ENCODE measurements at regions of chr10 and their contacts with region 1.

Region 1: GRCh38 chr10:6050801-6051445 is 11.2 kb downstream of the IL2RA start:
- DNase-seq: peak; percentile 97
- H3K4me3 Mint-ChIP-seq: peak overlapping the region; percentile 83
- H3K27ac Mint-ChIP-seq: peak overlapping the region; percentile 98
- H3K4me1 Mint-ChIP-seq: peaks cover 86% of the 10 kb centered on the region
- H3K27me3 Mint-ChIP-seq: no peaks in the 10 kb centered on the region

Region 2: DNA sequence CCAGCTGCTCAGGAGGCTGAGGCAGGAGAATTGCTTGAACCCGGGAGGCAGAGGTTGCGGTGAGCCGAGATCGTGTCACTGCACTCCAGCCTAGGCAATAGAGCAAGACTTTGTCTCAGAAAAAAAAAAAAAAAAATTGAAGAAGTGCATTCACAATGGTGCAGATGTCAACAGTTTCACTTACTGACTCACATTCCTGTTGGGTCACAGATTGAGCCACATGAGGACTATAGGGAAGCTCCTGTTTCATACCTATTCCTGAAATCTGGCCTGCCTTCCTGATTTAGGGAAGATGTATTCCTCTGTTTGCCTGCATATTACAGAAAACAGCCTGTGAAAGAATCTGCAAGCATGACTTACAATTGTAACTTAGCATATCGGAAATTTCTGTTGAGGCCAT is 776.1 kb before region 1 on chr10:
- CTCF ChIA-PET with region 1: no interaction called
- POLR2A ChIA-PET with region 1: no interaction called
- intact Hi-C with region 1: no loop called
- DNase-seq: no peak
- H3K4me3 Mint-ChIP-seq: no peak overlapping the region
- H3K27ac Mint-ChIP-seq: no peak overlapping the region
- H3K4me1 Mint-ChIP-seq: peaks cover 12% of the 10 kb centered on the region
- H3K27me3 Mint-ChIP-seq: no peaks in the 10 kb centered on the region

Region 3: DNA sequence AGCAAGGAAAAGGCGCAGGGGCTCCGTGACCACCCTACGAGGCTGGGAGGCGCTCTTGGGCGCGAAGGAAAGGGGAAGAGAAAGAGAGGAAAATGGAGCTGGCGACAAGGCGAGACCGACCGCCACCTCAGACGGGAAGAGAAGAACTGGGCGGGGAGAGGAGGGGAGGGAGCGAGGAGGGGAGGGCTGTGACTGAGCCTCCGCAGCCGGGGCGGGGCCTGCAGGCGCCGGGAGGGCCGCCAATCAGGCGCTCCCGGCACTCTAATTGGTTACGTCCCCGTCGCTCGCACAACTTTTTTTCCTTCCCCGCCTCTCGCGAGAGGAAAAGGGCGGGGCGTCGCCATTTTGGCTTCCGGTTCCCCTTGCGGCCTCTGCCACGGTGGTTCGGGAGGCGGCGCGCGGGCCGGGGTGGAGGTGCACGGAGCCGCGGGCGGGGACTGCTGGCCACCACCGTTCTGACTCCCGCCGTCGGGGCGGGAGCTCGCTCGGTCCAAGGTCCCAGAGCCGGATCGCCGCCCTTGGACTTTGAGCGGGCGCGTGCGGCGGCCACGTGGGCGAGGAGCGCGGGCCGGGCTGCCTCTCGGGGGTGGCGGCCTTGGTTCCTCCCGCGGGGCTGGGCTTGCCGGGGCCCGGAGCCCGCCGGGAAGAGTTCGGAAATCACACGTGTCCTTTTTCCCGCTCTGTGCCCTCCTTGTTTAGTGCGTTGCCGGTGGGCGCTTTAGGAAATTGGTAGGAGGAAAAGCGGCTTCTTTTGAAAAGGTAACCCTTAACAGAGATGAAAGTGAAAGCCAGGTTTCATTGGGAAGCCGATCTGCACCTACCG is 237.4 kb before region 1 on chr10 and contains the start of gene GDI2:
- CTCF ChIA-PET with region 1: no interaction called
- POLR2A ChIA-PET with region 1: no interaction called
- intact Hi-C with region 1: loop called (anchors 5 kb)
- DNase-seq: peak; percentile 98
- H3K4me3 Mint-ChIP-seq: peak within 1 kb of the TSS; percentile 82
- H3K27ac Mint-ChIP-seq: peak within 1 kb of the TSS; percentile 95
- H3K4me1 Mint-ChIP-seq: peaks cover 60% of the 10 kb centered on the region
- H3K27me3 Mint-ChIP-seq: no peaks in the 10 kb centered on the region
- total RNA-seq, gene GDI2: 283 to 286 TPM

Region 4: GRCh38 chr10:6014241-6014761 is 36.6 kb before region 1 on chr10:
- CTCF ChIA-PET with region 1: interaction called, 5 read pairs
- POLR2A ChIA-PET with region 1: interaction called, 3 read pairs
- intact Hi-C with region 1: loop called (anchors 1 kb)
- DNase-seq: peak; percentile 67
- H3K4me3 Mint-ChIP-seq: no peak overlapping the region
- H3K27ac Mint-ChIP-seq: peak overlapping the region; percentile 90
- H3K4me1 Mint-ChIP-seq: peaks cover 69% of the 10 kb centered on the region
- H3K27me3 Mint-ChIP-seq: no peaks in the 10 kb centered on the region

Region 5: DNA sequence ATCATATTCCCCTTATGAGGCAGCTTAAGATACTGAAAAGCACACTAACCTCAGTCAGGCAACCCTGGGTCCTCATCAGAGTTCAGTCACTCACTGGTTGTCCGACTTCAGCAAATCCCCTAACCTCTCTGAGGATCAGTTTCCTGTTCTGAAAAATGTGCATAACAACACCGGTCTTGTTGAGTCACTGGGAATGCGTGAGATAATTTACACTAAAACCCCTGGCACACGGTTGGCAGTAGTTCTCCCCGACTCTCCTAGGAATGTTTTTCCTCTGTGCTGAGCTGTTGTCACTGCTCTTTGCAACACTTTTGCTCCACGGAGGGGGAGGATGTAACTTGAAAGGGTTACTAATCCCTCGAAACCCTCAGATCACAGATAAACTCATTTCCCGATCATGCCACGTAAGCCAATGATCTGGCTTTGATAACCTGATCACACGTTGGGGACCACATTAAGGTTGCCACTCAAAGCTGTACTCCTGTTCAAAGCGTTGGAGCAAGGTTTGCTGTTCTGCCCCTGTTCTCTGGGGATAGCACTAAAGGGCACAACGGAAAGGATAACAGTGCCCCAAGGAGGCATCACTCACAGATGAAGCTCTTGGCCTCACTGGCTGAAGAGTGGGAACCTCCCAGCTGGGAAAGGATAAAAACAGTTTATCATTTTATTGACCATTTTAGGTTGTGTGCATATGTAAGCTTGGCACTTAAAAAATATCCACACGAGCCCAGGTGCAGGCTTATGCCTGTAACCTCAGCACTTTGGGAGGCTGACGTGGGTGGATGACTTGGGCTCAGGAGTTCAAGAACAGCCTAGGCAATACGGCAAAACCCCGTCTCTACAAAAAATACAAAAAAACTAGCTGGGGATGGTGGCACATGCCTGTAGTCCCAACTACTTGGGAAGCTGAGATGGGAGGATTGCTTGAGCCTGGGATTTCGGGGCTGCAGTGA is 32.9 kb after region 1 on chr10:
- CTCF ChIA-PET with region 1: interaction called, 167 read pairs
- POLR2A ChIA-PET with region 1: interaction called, 343 read pairs
- intact Hi-C with region 1: loop called (anchors 1 kb)
- DNase-seq: peak; percentile 87
- H3K4me3 Mint-ChIP-seq: peak overlapping the region; percentile 71
- H3K27ac Mint-ChIP-seq: peak overlapping the region; percentile 94
- H3K4me1 Mint-ChIP-seq: peaks cover 65% of the 10 kb centered on the region
- H3K27me3 Mint-ChIP-seq: no peaks in the 10 kb centered on the region

Region 6: GRCh38 chr10:6269953-6270867 is 219.3 kb after region 1 on chr10:
- CTCF ChIA-PET with region 1: no interaction called
- POLR2A ChIA-PET with region 1: interaction called, 4 read pairs
- intact Hi-C with region 1: loop called (anchors 5 kb)
- DNase-seq: peak; percentile 91
- H3K4me3 Mint-ChIP-seq: peak overlapping the region; percentile 35
- H3K27ac Mint-ChIP-seq: peak overlapping the region; percentile 97
- H3K4me1 Mint-ChIP-seq: peaks cover 63% of the 10 kb centered on the region
- H3K27me3 Mint-ChIP-seq: no peaks in the 10 kb centered on the region

Region 7: GRCh38 chr10:6343305-6344010 is 292.5 kb after region 1 on chr10:
- CTCF ChIA-PET with region 1: no interaction called
- POLR2A ChIA-PET with region 1: no interaction called
- intact Hi-C with region 1: no loop called
- DNase-seq: no peak
- H3K4me3 Mint-ChIP-seq: no peak overlapping the region
- H3K27ac Mint-ChIP-seq: no peak overlapping the region
- H3K4me1 Mint-ChIP-seq: peaks cover 33% of the 10 kb centered on the region
- H3K27me3 Mint-ChIP-seq: no peaks in the 10 kb centered on the region

Measured in activated CD4-positive, alpha-beta memory T cell treated with anti-CD3 and anti-CD28 coated beads for 36 hours (primary cell).